GM12878 (cell line): ENCODE measurements at regions of chrX and their contacts with region 1.

Region 1: DNA sequence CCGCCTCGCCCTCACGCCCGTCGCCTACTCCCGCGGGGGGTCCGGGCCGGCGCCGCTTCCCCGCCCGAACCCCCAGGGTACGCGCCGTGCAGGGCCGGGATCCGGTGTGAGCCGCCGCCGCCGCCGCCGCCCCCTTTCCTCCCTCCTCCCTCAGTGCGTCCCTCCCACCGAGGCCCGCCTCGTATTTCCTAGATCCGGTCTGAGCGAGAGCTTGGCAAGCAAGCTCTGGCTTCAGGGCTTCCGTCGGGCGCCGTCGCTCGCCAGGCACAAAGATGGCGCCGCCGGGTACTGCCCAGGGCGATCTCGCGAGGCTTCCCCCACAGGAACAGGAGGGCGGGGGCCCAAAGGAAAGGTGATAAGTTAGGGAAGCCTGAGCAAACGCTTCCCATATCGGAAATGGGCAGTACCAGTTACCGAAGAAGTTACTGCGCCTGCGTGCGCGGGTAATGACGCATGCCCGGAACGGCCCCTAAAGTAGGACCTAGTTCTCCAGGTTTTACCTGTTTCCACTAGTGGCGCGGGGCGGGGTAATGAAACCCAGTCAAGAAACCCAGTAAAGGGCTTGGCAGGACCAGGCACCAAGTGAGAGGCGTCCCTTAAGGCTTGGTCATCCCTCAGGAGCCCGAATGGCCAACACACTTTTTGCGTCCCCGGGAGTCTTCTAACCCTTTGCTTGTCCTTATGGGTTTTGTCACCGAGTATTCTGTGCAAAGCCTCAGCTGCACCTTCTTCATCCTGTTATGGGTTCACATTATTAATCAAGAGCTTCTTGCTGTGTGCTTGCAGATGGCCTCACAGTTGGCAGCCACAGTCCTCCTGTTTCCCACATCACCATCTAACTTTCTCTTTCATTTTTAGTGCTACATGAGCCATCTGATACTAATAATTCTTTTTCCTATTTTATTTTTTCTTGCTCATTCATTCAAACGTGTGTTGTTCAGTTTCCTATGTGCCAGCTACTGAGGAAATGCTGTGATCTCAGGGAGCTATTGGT is at the start of gene TAB3:
- DNase-seq: peak; percentile 89
- ATAC-seq: peak; percentile 93
- H3K4me3 ChIP-seq: peak within 1 kb of the TSS; percentile 66
- H3K27ac ChIP-seq: peak within 1 kb of the TSS; percentile 73
- H3K4me1 ChIP-seq: no peaks in the 10 kb centered on the region
- H3K27me3 ChIP-seq: no peaks in the 10 kb centered on the region; a peak in 1 of 4 replicates
- CTCF ChIP-seq: no peak
- EP300 ChIP-seq: no peak
- POLR2A ChIP-seq: peak; percentile 53; the same call in 1 of the 2 replicates
- RAD21 ChIP-seq: no peak
- polyA plus RNA-seq, gene TAB3: 1.7 to 2.0 TPM

Region 2: GRCh38 chrX:30577362-30577991 is 312.0 kb before region 1 on chrX and contains the start of gene TASL:
- CTCF ChIA-PET with region 1: no interaction called
- POLR2A ChIA-PET with region 1: no interaction called
- RAD21 ChIA-PET with region 1: no interaction called
- SMC1A ChIA-PET with region 1: no interaction called
- in situ Hi-C with region 1: no loop called
- intact Hi-C with region 1: loop called (anchors 5 kb)
- DNase-seq: peak; percentile 94
- ATAC-seq: peak; percentile 83
- H3K4me3 ChIP-seq: peak within 1 kb of the TSS; percentile 98
- H3K27ac ChIP-seq: peak within 1 kb of the TSS; percentile 99
- H3K4me1 ChIP-seq: peaks cover 16% of the 10 kb centered on the region
- H3K27me3 ChIP-seq: no peaks in the 10 kb centered on the region
- CTCF ChIP-seq: no peak
- EP300 ChIP-seq: peak; percentile 94 to 96
- POLR2A ChIP-seq: peak; percentile 60
- RAD21 ChIP-seq: no peak
- polyA plus RNA-seq, gene TASL: 18.2 to 19.4 TPM

Region 3: GRCh38 chrX:30635630-30636029 is 253.8 kb before region 1 on chrX:
- CTCF ChIA-PET with region 1: no interaction called
- POLR2A ChIA-PET with region 1: no interaction called
- RAD21 ChIA-PET with region 1: no interaction called
- SMC1A ChIA-PET with region 1: no interaction called
- in situ Hi-C with region 1: no loop called
- intact Hi-C with region 1: loop called (anchors 5 kb)
- DNase-seq: no peak
- ATAC-seq: peak; percentile 42; the same call in 2 of the 3 replicates
- H3K4me3 ChIP-seq: no peak overlapping the region
- H3K27ac ChIP-seq: no peak overlapping the region
- H3K4me1 ChIP-seq: no peaks in the 10 kb centered on the region
- H3K27me3 ChIP-seq: no peaks in the 10 kb centered on the region
- CTCF ChIP-seq: peak; percentile 27 to 43 (median 36); a peak in 4 of 6 replicates
- EP300 ChIP-seq: no peak
- POLR2A ChIP-seq: no peak
- RAD21 ChIP-seq: peak; percentile 55

Region 4: DNA sequence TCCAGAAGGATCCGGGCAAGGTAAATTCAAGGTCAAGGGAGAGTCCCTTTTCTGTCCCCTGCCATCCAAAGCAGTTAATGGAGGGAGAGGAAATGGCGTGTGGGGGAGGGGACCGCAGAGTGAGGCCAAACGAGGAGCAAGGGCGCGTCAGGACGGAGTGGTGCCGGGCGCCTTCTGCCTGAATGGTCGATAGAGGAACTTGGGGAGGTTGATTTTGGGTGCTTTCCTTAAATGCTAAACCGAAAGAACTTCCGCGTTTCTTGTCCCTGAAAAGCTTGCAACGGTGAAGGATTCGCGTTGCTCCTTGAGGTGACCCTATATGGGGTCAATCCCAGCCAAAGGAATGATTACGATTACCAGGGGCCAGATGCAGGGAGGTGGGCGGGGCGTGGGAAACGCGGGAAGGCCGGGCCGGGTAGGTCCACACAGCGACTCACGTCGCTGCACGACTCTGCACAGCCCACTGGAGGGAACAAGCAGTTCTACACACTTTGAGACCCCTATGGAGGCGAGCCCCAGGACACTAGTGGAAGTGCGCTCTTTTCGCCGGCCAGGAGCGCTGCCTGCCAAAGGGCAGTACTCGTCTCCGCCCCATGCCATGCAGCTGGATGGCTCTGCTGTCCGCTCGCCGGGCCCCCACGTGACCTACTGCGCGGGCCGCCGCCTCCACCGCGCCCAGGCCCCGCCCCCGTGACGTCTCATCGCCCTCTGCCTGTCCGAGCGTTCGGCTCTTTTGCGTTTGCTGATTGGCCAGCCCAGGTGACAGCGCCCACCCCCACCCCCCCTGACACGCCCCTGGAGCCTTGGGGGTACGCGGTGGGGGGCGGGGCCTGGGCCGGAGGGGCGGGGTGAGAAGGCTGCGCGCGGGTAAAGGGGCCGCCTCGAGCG is 236.7 kb before region 1 on chrX:
- CTCF ChIA-PET with region 1: no interaction called
- POLR2A ChIA-PET with region 1: no interaction called
- RAD21 ChIA-PET with region 1: no interaction called
- SMC1A ChIA-PET with region 1: no interaction called
- in situ Hi-C with region 1: no loop called
- intact Hi-C with region 1: loop called (anchors 5 kb)
- DNase-seq: peak; percentile 64
- ATAC-seq: peak; percentile 87
- H3K4me3 ChIP-seq: peak overlapping the region; percentile 51; the same call in 1 of the 2 replicates
- H3K27ac ChIP-seq: peak overlapping the region; percentile 83
- H3K4me1 ChIP-seq: no peaks in the 10 kb centered on the region; the same call in 1 of the 2 replicates
- H3K27me3 ChIP-seq: no peaks in the 10 kb centered on the region
- CTCF ChIP-seq: no peak
- EP300 ChIP-seq: no peak
- POLR2A ChIP-seq: peak; percentile 84
- RAD21 ChIP-seq: no peak

Region 5: GRCh38 chrX:30822068-30822681 is 67.3 kb before region 1 on chrX:
- CTCF ChIA-PET with region 1: no interaction called
- POLR2A ChIA-PET with region 1: no interaction called
- RAD21 ChIA-PET with region 1: no interaction called
- SMC1A ChIA-PET with region 1: interaction called, 5 read pairs
- in situ Hi-C with region 1: no loop called
- intact Hi-C with region 1: loop called (anchors 2 kb)
- DNase-seq: peak; percentile 34
- ATAC-seq: peak; percentile 94
- H3K4me3 ChIP-seq: no peak overlapping the region
- H3K27ac ChIP-seq: peak overlapping the region; percentile 37; the same call in 1 of the 2 replicates
- H3K4me1 ChIP-seq: no peaks in the 10 kb centered on the region; the same call in 1 of the 2 replicates
- H3K27me3 ChIP-seq: no peaks in the 10 kb centered on the region
- CTCF ChIP-seq: 0 out of 6 replicates have a peak, but pooled peaks of 1 of the 3 experiments have one; percentile 1
- EP300 ChIP-seq: no peak
- POLR2A ChIP-seq: no peak
- RAD21 ChIP-seq: peak; percentile 18; the same call in 1 of the 2 replicates

Region 6: DNA sequence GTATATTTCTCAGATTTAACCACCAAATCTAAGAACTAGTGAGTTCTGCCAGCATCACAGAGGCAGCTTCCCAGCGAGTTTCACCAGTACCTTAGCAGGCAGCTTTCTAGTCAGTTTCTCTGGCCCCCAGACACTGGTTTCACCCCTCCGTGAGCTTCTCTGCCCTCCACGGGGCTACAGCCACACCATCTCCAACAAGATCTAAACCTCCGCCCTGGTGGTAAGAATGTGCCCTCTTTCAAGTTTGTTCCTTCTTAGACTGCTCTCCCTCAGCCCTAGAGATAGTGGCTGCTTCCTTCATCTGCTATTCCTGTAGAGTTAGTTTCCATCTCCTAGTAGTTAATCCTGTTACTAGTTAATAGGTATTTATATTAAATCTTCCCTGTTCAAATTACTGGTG is 60.1 kb after region 1 on chrX:
- CTCF ChIA-PET with region 1: no interaction called
- POLR2A ChIA-PET with region 1: no interaction called
- RAD21 ChIA-PET with region 1: no interaction called
- SMC1A ChIA-PET with region 1: no interaction called
- in situ Hi-C with region 1: no loop called
- intact Hi-C with region 1: no loop called
- DNase-seq: no peak
- ATAC-seq: no peak
- H3K4me3 ChIP-seq: no peak overlapping the region
- H3K27ac ChIP-seq: no peak overlapping the region
- H3K4me1 ChIP-seq: no peaks in the 10 kb centered on the region
- H3K27me3 ChIP-seq: no peaks in the 10 kb centered on the region
- CTCF ChIP-seq: no peak
- EP300 ChIP-seq: no peak
- POLR2A ChIP-seq: no peak
- RAD21 ChIP-seq: no peak

Region 7: GRCh38 chrX:30992381-30992904 is 103.0 kb after region 1 on chrX:
- CTCF ChIA-PET with region 1: no interaction called
- POLR2A ChIA-PET with region 1: no interaction called
- RAD21 ChIA-PET with region 1: no interaction called
- SMC1A ChIA-PET with region 1: no interaction called
- in situ Hi-C with region 1: no loop called
- intact Hi-C with region 1: no loop called
- DNase-seq: no peak
- ATAC-seq: no peak
- H3K4me3 ChIP-seq: no peak overlapping the region
- H3K27ac ChIP-seq: no peak overlapping the region
- H3K4me1 ChIP-seq: no peaks in the 10 kb centered on the region
- H3K27me3 ChIP-seq: 0 out of 4 replicates have a peak, but pooled peaks cover 0 to 2% of the 10 kb centered on the region in 2 experiments
- CTCF ChIP-seq: no peak
- EP300 ChIP-seq: no peak
- POLR2A ChIP-seq: no peak
- RAD21 ChIP-seq: no peak